ENCODE measurements at regions of chr19 and their contacts with region 1.

Region 1: DNA sequence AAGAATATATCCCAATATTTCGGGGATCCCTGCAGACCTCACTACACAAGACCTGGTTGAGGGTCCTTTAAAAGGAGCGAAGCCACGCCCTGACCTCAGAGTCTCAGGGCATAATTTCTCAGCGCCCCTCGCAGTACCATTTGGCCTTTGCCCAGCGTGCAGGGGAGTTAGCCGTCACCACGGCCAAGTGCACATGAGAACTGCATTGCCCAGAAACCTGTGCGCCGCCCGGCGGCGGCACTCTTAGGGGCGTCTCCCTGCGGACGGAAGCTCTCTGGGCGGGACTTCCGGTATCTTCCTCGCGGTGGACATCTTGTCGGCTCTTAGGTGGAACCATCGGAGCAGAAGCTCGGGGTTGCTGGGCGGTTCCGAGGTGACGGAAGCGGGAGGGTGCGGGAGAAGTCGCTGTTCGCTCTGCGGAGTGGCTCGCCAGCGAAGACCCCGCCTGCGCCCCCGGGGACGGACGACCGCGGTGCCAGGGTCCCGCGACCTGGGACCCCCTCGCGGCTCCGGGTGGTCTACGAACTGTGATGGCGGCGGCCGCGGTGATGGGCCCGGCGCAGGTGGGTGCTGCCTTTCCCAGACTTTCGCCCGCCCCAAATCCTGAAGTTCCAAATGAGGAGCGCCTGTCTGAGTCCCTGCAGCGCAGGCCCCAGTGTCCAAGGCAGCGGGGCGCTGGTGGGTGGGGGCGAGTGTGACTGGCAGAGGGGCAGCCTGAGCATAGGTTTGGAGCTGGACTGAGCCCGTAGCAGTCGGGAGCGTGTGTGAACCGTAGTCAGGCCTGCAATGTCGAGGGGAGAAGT is at the start of gene ZNF134:
- DNase-seq: peak; percentile 84
- H3K4me3 ChIP-seq: peak within 1 kb of the TSS; percentile 53 to 77 (median 65)
- H3K27ac ChIP-seq: no peak within 1 kb of the TSS
- H3K4me1 ChIP-seq: no peaks in the 10 kb centered on the region
- H3K27me3 ChIP-seq: no peaks in the 10 kb centered on the region
- CTCF ChIP-seq: peak in 1 of 2 donors; percentile 62
- POLR2A ChIP-seq: peak; percentile 49
- total RNA-seq, gene ZNF134: 11.1 and 12.3 TPM in 2 replicates

Region 2: DNA sequence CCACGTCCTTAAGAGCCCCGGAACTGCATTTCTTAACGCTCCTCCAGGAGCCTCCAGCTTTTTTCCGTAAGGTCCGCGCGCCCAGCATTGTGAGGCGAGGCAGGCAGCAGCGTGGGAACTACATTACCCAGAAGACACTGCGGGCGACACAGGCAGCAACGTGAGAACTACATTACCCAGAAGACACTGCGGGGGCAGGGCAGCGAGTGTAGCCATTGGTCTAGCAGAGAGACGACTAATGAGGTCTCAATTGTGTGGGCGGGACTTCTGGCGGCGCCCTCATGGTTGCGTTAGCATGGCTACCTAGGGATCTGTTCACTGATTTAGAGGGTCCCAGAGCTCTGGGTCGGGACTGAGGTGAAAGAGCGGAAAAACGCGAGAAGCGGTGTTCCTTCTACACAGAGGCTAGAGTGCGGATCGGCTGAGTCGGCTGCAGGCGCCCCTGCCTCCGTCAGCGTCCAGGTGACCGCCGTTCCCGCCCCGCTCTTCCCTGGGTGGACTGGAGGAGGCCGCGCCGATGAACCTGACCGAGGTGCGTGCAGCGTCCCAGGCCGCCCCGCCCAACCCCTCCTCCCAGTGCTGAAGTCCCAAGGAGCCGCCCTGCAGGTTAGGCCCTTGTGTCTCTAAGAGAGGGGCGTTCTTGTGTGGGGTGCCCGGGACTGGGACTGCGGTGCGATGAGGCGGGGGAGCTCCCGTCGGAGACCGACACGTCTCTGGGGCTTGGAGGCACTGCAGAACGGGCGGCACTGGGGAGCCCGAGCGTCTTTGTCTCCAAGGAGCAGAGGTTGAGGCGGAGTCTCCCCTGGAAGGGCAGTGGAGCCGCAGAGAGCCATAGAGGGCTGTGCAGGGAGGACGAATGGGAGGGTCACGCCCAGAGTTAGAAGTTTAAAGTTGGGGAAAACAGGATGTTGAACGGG is 178.8 kb before region 1 on chr19 and contains the start of gene ZNF749:
- CTCF ChIA-PET with region 1: no interaction called
- POLR2A ChIA-PET with region 1: no interaction called
- dilution Hi-C with region 1: no loop called
- intact Hi-C with region 1: loop called (anchors 1 kb)
- DNase-seq: peak; percentile 98
- H3K4me3 ChIP-seq: peak within 1 kb of the TSS; percentile 58 to 81 (median 68)
- H3K27ac ChIP-seq: no peak within 1 kb of the TSS
- H3K4me1 ChIP-seq: peaks cover 10% of the 10 kb centered on the region
- H3K27me3 ChIP-seq: no peaks in the 10 kb centered on the region
- CTCF ChIP-seq: no peak
- POLR2A ChIP-seq: peak; percentile 14
- total RNA-seq, gene ZNF749: 8.9 and 11.5 TPM in 2 replicates

Region 3: DNA sequence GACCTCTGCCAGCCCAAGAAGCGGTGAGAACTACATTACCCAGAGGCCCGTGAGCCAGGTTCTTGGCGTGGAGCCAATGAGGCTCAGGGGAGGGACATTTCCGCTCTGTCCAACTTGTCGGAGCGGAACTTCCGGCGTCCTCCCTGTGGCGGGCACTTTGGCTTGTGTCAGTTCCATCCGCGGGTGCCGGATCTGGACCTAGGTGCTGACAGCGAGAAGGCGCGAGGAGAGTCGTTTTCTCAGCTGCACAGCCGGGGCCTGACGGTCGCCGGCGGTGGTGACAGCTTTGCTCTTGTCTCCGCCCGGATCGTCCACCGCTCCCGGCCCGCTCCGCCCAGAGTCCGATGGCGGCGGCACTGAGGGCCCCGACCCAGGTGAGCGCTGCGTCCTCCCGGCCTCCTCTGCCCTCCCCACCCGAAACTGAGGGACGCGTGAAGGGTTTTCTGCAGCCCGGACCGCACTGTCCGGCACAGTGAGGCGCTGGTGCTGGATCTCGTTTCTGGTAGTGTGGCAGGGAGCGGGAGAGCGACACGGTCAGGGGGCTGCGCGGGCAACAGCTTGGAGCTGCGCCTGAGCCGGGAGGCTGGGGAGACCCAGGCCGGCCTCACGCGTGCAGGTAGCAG is 14.3 kb before region 1 on chr19 and contains the start of gene ZNF530:
- CTCF ChIA-PET with region 1: no interaction called
- POLR2A ChIA-PET with region 1: no interaction called
- dilution Hi-C with region 1: no loop called
- intact Hi-C with region 1: loop called (anchors 1 kb)
- DNase-seq: peak; percentile 81
- H3K4me3 ChIP-seq: peak within 1 kb of the TSS; percentile 38 to 76 (median 61)
- H3K27ac ChIP-seq: no peak within 1 kb of the TSS
- H3K4me1 ChIP-seq: peaks cover 2% of the 10 kb centered on the region
- H3K27me3 ChIP-seq: no peaks in the 10 kb centered on the region
- CTCF ChIP-seq: no peak
- POLR2A ChIP-seq: no peak
- total RNA-seq, gene ZNF530: 4.0 TPM in 2 replicates

Region 4: GRCh38 chr19:57701625-57702024 is 87.5 kb after region 1 on chr19:
- CTCF ChIA-PET with region 1: no interaction called
- POLR2A ChIA-PET with region 1: no interaction called
- dilution Hi-C with region 1: no loop called
- intact Hi-C with region 1: no loop called
- DNase-seq: no peak
- H3K4me3 ChIP-seq: no peak overlapping the region
- H3K27ac ChIP-seq: no peak overlapping the region
- H3K4me1 ChIP-seq: no peaks in the 10 kb centered on the region
- H3K27me3 ChIP-seq: no peaks in the 10 kb centered on the region
- CTCF ChIP-seq: no peak
- POLR2A ChIP-seq: no peak

Measured in endothelial cell of umbilical vein (primary cell).